SK-N-SH (cell line): ENCODE measurements at regions of chr11 and their contacts with region 1.

Region 1: DNA sequence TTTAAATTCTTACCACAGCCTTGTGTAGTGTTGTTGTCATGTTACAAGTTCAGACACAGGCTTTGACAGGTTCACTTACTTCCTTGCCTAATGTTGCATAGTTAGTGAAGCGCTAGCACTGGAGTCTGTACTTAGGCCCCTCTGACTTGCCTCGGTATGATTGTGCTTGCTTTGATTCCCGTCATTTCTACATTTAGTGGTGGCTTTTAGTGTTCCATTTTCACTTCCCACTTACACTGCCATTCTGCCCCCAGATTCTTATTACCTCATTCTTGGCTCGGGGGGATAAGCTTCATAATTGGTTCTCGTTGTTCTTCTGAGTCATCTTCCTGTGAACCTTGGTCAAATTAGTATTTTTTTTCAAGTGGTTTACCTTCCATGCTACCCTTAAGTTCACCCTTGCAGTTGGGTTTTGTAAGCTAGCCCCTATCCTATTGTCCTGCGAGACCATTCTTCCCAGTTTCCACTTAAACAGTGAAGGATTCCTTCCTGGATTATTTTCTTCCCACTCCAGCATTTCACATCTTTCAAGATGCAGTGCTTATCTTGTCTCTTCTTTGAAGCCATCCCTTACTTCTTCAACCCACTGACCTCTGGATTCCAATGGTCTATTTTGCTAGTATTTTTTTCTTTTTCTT is 68.7 kb downstream of the DDX10 start:
- DNase-seq: no peak
- H3K4me3 ChIP-seq: no peak overlapping the region
- H3K27ac ChIP-seq: peak overlapping the region in 1 of 2 experiments; percentile 13; a peak in 1 of 4 replicates
- H3K4me1 ChIP-seq: peaks cover 2 to 27% of the 10 kb centered on the region in 2 experiments; a peak in 3 of 4 replicates
- H3K27me3 ChIP-seq: no peaks in the 10 kb centered on the region
- CTCF ChIP-seq: no peak
- EP300 ChIP-seq: no peak
- RAD21 ChIP-seq: no peak

Region 2: GRCh38 chr11:108748968-108749367 is 15.4 kb after region 1 on chr11:
- CTCF ChIA-PET with region 1: interaction called, 11 read pairs
- POLR2A ChIA-PET with region 1: no interaction called
- DNase-seq: no peak
- H3K4me3 ChIP-seq: no peak overlapping the region
- H3K27ac ChIP-seq: no peak overlapping the region
- H3K4me1 ChIP-seq: no peaks in the 10 kb centered on the region; a peak in 2 of 4 replicates
- H3K27me3 ChIP-seq: no peaks in the 10 kb centered on the region
- CTCF ChIP-seq: no peak
- EP300 ChIP-seq: no peak
- RAD21 ChIP-seq: no peak

Region 3: GRCh38 chr11:108754901-108755632 is 21.5 kb after region 1 on chr11:
- CTCF ChIA-PET with region 1: interaction called, 15 read pairs
- POLR2A ChIA-PET with region 1: no interaction called
- DNase-seq: no peak
- H3K4me3 ChIP-seq: no peak overlapping the region
- H3K27ac ChIP-seq: no peak overlapping the region
- H3K4me1 ChIP-seq: peaks cover 0 to 4% of the 10 kb centered on the region in 2 experiments; a peak in 3 of 4 replicates
- H3K27me3 ChIP-seq: no peaks in the 10 kb centered on the region
- CTCF ChIP-seq: no peak
- EP300 ChIP-seq: no peak
- RAD21 ChIP-seq: no peak